OCI-LY7 (cell line): ENCODE measurements at regions of chr20 and their contacts with region 1.

Region 1: DNA sequence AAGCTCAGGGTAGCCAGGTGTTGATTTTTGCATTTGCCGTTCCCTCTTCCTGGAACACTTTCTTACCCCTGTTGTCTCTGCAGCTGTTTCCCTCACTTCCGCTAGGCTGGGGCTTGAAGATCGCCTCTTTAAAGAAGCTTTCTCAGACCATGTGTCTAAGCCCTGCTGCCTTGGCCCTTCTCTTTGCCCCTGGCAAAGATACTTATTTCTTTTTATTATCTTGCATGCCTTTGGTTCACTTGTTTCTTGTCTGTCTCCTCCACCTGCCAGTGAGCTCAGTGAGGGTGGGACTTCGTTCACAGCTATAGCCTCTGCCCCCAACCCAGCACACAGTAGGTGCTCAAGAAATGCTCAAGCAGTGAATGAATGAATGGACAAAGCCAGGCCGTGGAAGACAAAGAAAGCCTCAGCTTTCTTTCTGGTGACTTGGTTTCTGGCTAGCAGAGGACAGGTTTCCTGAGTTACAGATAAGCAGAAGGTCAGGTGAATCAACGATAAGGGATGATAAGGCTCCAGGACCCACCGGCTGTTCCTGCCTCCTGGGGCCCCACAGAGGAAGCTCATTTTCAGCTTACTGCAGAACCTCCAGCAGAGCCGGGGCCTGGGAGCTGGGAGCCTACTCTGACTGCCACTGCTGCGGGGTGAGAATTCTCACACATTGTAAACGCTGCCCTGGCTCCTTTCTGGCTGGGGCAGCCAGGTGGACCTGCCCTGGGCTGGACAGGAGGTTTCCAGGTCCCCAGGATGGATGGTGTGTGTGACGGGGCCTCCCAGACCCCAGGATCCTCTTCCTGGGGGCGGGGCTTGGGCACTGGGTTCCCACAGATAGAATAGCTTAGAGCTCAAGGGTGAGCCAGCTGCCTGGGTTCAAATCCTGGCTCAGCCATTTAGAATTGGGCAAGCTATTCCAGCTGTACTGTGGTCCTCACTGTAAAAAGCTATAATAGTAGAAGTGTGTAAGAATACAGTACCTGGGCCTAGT is 29.8 kb downstream of the SNAI1 start:
- DNase-seq: peak; percentile 94
- H3K4me3 ChIP-seq: peak overlapping the region; percentile 35
- H3K27ac ChIP-seq: peak overlapping the region; percentile 96
- H3K4me1 ChIP-seq: peaks cover 33% of the 10 kb centered on the region
- CTCF ChIP-seq: no peak

Region 2: GRCh38 chr20:49928401-49929141 is 84.0 kb before region 1 on chr20:
- CTCF ChIA-PET with region 1: no interaction called
- POLR2A ChIA-PET with region 1: no interaction called
- intact Hi-C with region 1: no loop called
- DNase-seq: peak; percentile 88
- H3K4me3 ChIP-seq: no peak overlapping the region
- H3K27ac ChIP-seq: no peak overlapping the region
- H3K4me1 ChIP-seq: peaks cover 13% of the 10 kb centered on the region
- CTCF ChIP-seq: peak; percentile 97

Region 3: DNA sequence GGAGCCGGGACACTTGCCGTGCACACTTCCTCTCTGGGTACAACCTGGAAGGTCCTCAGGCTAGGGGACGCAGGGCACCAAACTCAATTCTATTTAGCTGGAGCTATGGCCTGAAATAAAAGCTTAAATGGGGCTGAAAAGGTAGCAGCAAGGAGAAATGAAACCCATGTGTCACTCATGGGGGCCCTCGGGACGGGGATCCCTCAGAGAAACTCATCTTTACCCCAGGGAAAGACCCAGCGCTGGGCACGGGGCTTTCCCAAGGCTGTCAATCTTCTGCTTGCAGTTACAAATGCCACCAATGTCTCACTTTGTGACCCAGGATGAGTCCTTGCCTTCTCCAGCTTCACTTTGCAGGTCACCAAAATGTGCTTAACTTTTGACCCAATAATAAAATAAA is 13.2 kb before region 1 on chr20:
- CTCF ChIA-PET with region 1: interaction called, 3 read pairs
- POLR2A ChIA-PET with region 1: interaction called, 16 read pairs
- intact Hi-C with region 1: no loop called
- DNase-seq: no peak
- H3K4me3 ChIP-seq: no peak overlapping the region
- H3K27ac ChIP-seq: no peak overlapping the region
- H3K4me1 ChIP-seq: peaks cover 33% of the 10 kb centered on the region
- CTCF ChIP-seq: no peak

Region 4: DNA sequence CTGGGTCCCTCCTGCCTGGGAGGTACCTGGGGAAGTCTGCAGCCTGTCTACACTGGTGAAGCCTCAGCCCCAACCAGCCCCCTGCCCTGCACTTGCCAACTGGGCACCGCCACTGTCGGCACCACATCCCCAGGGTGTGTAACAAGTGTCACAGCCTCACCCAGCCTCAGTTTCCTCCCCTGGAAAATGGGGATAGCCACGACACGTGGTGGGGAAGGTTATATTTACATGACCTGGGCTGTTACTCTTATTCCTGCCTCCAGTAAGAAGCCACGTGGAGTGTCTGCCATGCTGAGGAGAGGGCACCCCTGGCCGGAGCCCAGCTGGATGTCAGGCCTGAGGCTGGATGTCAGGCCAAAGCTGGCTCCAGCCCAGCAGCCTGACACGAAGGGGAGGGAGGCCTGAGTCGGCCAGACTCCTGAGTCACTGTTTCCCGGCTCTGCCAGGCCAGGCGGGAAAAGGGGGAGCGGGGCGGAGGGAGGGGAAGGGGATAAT is 15.1 kb after region 1 on chr20:
- CTCF ChIA-PET with region 1: no interaction called
- POLR2A ChIA-PET with region 1: interaction called, 10 read pairs
- intact Hi-C with region 1: no loop called
- DNase-seq: no peak
- H3K4me3 ChIP-seq: no peak overlapping the region
- H3K27ac ChIP-seq: no peak overlapping the region
- H3K4me1 ChIP-seq: peaks cover 12% of the 10 kb centered on the region
- CTCF ChIP-seq: no peak

Region 5: DNA sequence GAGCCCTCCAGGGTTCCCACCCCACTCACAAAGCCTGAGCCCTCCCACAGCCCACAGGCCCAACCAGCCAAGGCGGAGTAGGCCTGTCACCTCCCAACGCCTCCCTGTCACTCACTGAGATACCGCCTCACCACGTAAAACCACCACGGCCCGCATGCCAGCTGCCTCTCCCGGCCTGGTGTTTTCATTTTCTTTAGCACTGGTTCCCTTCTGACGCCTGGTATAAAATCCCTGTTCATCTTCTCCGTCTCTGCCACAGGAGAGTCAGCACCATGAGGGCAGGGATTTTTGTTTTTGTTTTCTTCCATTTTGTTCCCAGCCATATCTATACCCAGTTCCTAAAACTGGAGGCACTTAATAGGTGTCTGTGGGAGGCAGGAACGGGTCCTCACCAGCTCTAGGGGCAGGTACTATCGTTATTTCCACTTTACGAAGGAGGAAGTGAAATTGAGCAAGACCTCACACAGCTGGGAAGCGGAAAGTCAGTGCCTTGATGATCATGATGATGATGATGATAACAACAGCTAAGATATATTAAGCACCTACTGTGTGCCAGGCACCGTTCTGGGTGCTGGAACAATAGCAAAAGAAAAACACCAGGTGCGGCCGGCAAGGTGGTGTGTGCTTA is 28.8 kb after region 1 on chr20:
- CTCF ChIA-PET with region 1: no interaction called
- POLR2A ChIA-PET with region 1: interaction called, 11 read pairs
- intact Hi-C with region 1: no loop called
- DNase-seq: peak; percentile 88
- H3K4me3 ChIP-seq: peak overlapping the region; percentile 69
- H3K27ac ChIP-seq: peak overlapping the region; percentile 88
- H3K4me1 ChIP-seq: peaks cover 36% of the 10 kb centered on the region
- CTCF ChIP-seq: no peak